Right cardiac atrium (tissue), 5 donors: ENCODE measurements at regions of chr5 and their contacts with region 1.

Region 1: DNA sequence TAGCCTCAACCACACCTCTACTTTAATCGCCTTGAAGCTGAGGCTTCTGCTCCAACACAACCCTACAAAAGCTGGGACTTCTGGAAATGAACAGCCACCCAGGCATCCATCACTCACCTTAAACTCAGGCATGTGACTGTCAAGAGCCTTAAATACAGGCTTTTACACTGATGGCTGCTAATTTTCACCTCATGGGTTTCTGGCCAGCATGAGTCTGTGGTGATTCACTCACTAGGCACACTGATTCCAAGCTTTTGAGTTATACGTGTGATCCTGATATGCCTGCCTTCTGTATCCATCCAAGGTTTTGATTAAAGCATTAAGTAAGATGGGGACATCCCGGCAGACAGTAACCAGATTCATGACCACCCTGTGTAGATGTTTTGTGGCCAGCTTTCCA is 8.9 kb downstream of the NSUN2 start:
- DNase-seq: no peak
- ATAC-seq: no peak
- H3K4me3 ChIP-seq: no peak overlapping the region
- H3K27ac ChIP-seq: no peak overlapping the region
- H3K4me1 ChIP-seq: no peaks in the 10 kb centered on the region
- H3K27me3 ChIP-seq: no peaks in the 10 kb centered on the region

Region 2: GRCh38 chr5:6606884-6607558 is 16.9 kb before region 1 on chr5:
- intact Hi-C with region 1: loop called in 1 of 4 experiments (anchors 2 kb)
- DNase-seq: no peak
- ATAC-seq: no peak
- H3K4me3 ChIP-seq: no peak overlapping the region
- H3K27ac ChIP-seq: no peak overlapping the region
- H3K4me1 ChIP-seq: no peaks in the 10 kb centered on the region
- H3K27me3 ChIP-seq: no peaks in the 10 kb centered on the region

Region 3: DNA sequence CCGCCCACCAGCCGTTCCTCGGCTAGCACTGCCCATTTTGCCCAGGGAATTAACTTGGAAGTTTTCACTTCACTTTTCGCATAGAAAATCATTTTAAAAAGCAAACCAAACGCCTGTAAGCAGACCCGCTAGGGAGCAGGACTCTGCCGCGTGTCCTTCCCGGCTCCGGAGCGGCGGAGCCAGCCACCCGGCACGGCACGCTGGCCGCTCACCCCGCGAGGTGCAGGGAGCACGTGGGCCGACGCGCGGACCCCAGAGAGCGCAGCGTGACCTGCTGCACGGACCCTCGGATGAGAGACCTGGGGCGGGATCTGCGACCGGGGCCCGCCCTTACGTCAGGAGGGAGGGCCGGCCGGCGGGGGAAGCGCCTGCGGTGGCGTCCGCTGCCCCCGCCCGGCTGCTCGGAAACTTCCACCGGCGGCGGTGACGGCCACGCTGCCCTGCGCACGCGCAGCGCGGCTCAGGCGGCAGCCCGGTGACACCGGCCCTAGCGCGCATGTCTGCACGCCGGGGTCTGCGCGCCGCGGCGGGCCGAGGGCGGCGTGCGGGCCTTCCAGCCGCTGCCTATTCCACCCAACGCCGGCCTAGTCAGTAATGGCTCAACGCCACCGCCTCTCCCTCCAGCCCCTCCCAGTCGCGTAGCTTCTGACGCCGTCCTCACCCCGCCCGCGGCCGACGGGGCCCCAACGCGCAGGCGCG is 88.8 kb after region 1 on chr5:
- intact Hi-C with region 1: loop called in 1 of 4 experiments (anchors 10 kb)
- DNase-seq: peak; percentile 96 to 99 (median 98)
- ATAC-seq: peak; percentile 91 to 93
- H3K4me3 ChIP-seq: peak overlapping the region; percentile 94
- H3K27ac ChIP-seq: peak overlapping the region; percentile 98
- H3K4me1 ChIP-seq: peaks cover 18% of the 10 kb centered on the region
- H3K27me3 ChIP-seq: no peaks in the 10 kb centered on the region

Region 4: GRCh38 chr5:6976971-6977370 is 353.0 kb after region 1 on chr5:
- intact Hi-C with region 1: no loop called
- DNase-seq: no peak
- ATAC-seq: no peak
- H3K4me3 ChIP-seq: no peak overlapping the region
- H3K27ac ChIP-seq: no peak overlapping the region
- H3K4me1 ChIP-seq: no peaks in the 10 kb centered on the region
- H3K27me3 ChIP-seq: no peaks in the 10 kb centered on the region